Endothelial cell of umbilical vein (primary cell): ENCODE measurements at regions of chr17 and their contacts with region 1.

Region 1: GRCh38 chr17:7687908-7688807 is at the start of gene WRAP53:
- DNase-seq: peak; percentile 99
- H3K4me3 ChIP-seq: peak within 1 kb of the TSS; percentile 75 to 96 (median 79)
- H3K27ac ChIP-seq: peak within 1 kb of the TSS; percentile 93
- H3K4me1 ChIP-seq: peaks cover 26% of the 10 kb centered on the region
- H3K27me3 ChIP-seq: no peaks in the 10 kb centered on the region
- CTCF ChIP-seq: peak; percentile 97 to 99
- POLR2A ChIP-seq: peak; percentile 70
- total RNA-seq, gene WRAP53: 23.7 and 28.0 TPM in 2 replicates

Region 2: DNA sequence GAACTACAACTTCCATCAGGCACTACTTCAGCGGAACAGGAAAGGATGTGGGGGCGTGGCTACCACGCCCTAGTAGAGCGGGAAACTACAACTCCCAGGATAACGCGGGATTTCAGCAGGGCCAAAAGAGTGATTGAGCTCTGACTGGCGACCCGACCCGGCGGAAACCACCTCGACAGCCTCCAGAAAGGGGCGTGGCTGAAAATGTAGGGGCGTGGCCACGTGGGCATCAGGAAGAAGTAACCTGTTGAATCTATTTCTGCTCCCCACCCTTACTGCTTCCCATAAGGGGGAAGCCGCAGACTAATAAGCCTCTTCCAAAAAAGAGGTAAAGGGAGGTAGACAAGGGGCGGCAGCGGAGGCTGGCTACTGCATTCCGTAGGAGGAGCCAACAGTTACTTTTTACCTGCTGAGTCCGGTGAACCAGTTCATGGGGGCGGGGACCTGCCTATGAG is 252.9 kb before region 1 on chr17 and contains the start of gene TMEM102:
- CTCF ChIA-PET with region 1: interaction called, 4 read pairs
- POLR2A ChIA-PET with region 1: no interaction called
- dilution Hi-C with region 1: no loop called
- intact Hi-C with region 1: loop called (anchors 5 kb)
- DNase-seq: peak; percentile 97
- H3K4me3 ChIP-seq: peak within 1 kb of the TSS; percentile 54 to 83 (median 83)
- H3K27ac ChIP-seq: peak within 1 kb of the TSS; percentile 32
- H3K4me1 ChIP-seq: peaks cover 21% of the 10 kb centered on the region
- H3K27me3 ChIP-seq: peaks cover 18 to 21% of the 10 kb centered on the region in 2 experiments
- CTCF ChIP-seq: no peak
- POLR2A ChIP-seq: no peak
- total RNA-seq, gene TMEM102: 6.1 and 6.5 TPM in 2 replicates

Region 3: GRCh38 chr17:7589204-7589868 is 98.8 kb before region 1 on chr17:
- CTCF ChIA-PET with region 1: interaction called, 10 read pairs
- POLR2A ChIA-PET with region 1: interaction called, 3 read pairs
- dilution Hi-C with region 1: no loop called
- intact Hi-C with region 1: no loop called
- DNase-seq: peak; percentile 78
- H3K4me3 ChIP-seq: no peak overlapping the region
- H3K27ac ChIP-seq: no peak overlapping the region
- H3K4me1 ChIP-seq: peaks cover 16% of the 10 kb centered on the region
- H3K27me3 ChIP-seq: no peaks in the 10 kb centered on the region
- CTCF ChIP-seq: peak; percentile 94 to 95
- POLR2A ChIP-seq: no peak

Region 4: DNA sequence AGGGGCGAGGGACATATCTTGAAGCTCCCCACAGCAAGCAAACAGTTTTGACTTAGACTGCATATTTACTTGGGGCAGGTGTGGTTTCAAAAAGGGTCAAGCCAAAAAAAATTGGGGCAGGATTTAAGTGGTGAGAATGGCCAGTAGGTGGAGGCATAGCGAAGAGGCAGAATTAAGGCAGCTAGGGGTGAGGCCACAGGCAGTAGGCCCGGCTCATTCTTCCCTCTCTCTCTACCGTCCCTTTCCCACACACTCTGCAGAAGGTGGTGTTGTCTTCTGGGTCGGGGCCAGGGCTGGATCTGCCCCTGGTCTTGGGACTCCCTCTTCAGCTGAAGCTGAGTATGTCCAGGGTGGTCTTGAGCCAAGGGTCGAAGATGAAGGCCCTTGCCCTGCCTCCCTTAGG is 55.7 kb before region 1 on chr17:
- CTCF ChIA-PET with region 1: interaction called, 97 read pairs
- POLR2A ChIA-PET with region 1: interaction called, 3 read pairs
- dilution Hi-C with region 1: no loop called
- intact Hi-C with region 1: loop called (anchors 1 kb)
- DNase-seq: peak; percentile 24
- H3K4me3 ChIP-seq: no peak overlapping the region
- H3K27ac ChIP-seq: no peak overlapping the region
- H3K4me1 ChIP-seq: no peaks in the 10 kb centered on the region
- H3K27me3 ChIP-seq: no peaks in the 10 kb centered on the region
- CTCF ChIP-seq: peak; percentile 41 to 49
- POLR2A ChIP-seq: no peak

Region 5: DNA sequence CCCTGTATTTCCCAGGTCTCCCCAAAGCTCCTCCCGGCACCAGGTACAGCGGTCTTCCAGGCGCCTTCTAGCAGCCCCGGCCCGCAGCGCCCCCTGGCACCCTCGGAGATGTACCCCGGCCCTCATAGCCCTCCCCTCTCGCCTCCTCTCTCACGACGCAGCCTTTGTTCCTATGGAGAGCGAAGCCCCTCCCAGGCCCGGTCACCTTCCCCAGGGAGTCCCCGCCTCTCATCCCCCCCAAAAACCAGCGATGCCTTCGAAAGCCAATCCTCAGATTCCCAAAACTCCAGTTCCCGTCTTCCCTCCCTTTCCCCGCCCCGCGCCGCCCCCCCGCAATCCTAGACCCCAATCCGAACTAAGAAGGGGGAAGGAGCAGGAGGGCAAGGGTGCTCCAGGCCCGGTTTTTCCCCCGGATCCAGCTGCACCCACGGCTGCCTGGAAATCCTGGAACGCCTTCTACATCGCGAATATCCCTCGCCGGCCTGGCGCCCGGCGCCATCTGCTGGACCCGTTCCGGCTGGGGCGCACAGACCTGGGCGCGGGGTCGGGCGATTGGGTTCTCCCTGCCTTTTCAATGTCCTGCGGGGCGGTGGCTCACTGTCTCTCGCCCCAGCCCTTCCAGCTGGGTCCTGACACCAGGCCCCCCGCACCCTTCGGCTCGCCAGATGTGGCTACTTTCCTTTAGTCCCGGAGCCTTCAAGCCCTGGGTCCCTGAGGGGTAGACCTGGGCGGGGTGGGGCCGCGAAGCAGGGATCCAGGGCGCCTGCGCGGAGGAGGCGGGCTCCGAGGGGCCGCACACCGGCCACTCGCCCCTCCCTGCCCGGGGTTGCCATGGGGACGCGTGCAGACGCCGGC is 29.0 kb after region 1 on chr17 and contains the start of gene DNAH2:
- CTCF ChIA-PET with region 1: interaction called, 16 read pairs
- POLR2A ChIA-PET with region 1: no interaction called
- dilution Hi-C with region 1: no loop called
- intact Hi-C with region 1: loop called (anchors 1 kb)
- DNase-seq: peak; percentile 81
- H3K4me3 ChIP-seq: peak within 1 kb of the TSS; percentile 53 to 69 (median 63)
- H3K27ac ChIP-seq: no peak within 1 kb of the TSS
- H3K4me1 ChIP-seq: peaks cover 5% of the 10 kb centered on the region
- H3K27me3 ChIP-seq: peaks cover 23 to 29% of the 10 kb centered on the region in 2 experiments
- CTCF ChIP-seq: peak; percentile 35 to 66
- POLR2A ChIP-seq: no peak
- total RNA-seq, gene DNAH2: 0.11 TPM in 1 of 2 replicates, not detected in the other

Region 6: GRCh38 chr17:7745748-7746470 is 57.8 kb after region 1 on chr17:
- CTCF ChIA-PET with region 1: no interaction called
- POLR2A ChIA-PET with region 1: no interaction called
- dilution Hi-C with region 1: no loop called
- intact Hi-C with region 1: no loop called
- DNase-seq: peak; percentile 98
- H3K4me3 ChIP-seq: no peak overlapping the region
- H3K27ac ChIP-seq: peak overlapping the region; percentile 58
- H3K4me1 ChIP-seq: peaks cover 17% of the 10 kb centered on the region
- H3K27me3 ChIP-seq: peaks cover 0 to under 1% of the 10 kb centered on the region in 2 experiments
- CTCF ChIP-seq: peak in 1 of 2 donors; percentile 18
- POLR2A ChIP-seq: no peak

Region 7: GRCh38 chr17:7887482-7888183 is 199.5 kb after region 1 on chr17:
- CTCF ChIA-PET with region 1: no interaction called
- POLR2A ChIA-PET with region 1: no interaction called
- dilution Hi-C with region 1: no loop called
- intact Hi-C with region 1: loop called (anchors 5 kb)
- DNase-seq: peak; percentile 100
- H3K4me3 ChIP-seq: peak overlapping the region in 2 of 3 experiments; percentile 50 to 76
- H3K27ac ChIP-seq: peak overlapping the region; percentile 94
- H3K4me1 ChIP-seq: peaks cover 42% of the 10 kb centered on the region
- H3K27me3 ChIP-seq: no peaks in the 10 kb centered on the region
- CTCF ChIP-seq: no peak
- POLR2A ChIP-seq: peak; percentile 74